ENCODE measurements at regions of chr7 and their contacts with region 1.

Region 1: DNA sequence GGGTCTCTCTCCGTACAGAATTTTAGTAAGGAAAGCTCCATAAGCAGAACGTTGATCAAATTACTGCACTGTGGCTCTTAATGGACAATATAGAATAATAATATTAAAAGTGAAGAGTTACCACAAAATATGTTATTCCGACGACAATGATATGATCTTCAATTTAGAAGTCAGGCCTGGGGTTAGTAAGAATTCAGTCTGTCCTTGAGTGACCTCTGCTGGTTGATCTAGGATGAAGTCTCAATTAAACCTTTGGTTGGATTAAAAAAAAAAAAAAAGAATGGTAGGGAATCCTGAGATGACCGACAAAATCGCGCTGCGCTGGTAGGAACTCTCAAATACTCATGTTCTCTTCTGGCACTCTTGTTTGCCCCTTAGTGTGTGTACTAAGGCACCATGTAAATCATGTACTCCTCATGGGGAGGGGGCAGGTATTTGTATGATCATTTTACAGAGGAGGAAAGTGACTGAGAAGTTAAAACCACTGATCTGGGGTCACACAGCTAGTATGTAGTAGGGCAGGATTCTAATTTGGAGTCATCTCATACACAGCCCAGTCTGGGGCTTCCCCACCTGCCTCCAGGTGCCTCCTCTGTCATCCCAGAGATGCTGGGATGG is 161.3 kb upstream of the NPVF start:
- DNase-seq: no peak
- H3K4me3 Mint-ChIP-seq: no peak overlapping the region
- H3K27ac Mint-ChIP-seq: no peak overlapping the region
- H3K4me1 Mint-ChIP-seq: no peaks in the 10 kb centered on the region
- H3K27me3 Mint-ChIP-seq: peaks cover 22% of the 10 kb centered on the region

Region 2: DNA sequence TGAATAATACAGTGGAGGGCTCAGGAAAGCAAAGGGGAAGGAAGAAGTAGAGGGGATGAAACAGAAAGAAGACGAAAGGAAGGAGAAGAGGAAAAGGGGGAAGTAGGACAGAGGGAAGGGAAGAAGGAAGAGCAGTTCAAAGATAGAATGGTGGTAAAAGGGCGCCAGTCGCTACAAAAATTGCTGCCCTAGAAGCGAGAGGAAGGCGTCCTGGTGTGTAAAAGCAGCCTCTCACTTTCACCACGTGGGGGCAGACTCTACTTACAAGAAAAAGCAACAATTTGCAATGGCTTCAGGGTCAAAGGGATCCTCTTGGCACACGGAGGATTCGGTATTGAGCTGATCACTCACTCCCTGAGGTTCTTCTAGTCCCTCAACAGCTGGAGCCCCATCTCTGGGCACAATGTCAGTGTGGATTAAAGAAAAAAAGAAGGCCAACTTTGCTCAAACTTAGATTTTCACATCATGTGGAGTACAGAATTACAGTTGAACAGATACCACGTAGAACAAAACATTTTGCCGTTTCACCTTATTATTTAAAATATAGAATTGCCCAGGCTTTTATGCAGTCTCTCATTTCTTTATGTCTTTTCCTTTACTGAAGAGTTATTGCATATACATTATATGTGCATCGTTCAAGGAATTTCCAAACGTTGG is 129.9 kb before region 1 on chr7:
- CTCF ChIA-PET with region 1: interaction called, 17 read pairs
- POLR2A ChIA-PET with region 1: interaction called, 3 read pairs
- DNase-seq: peak; percentile 72
- H3K4me3 Mint-ChIP-seq: no peak overlapping the region
- H3K27ac Mint-ChIP-seq: no peak overlapping the region
- H3K4me1 Mint-ChIP-seq: peaks cover 23% of the 10 kb centered on the region
- H3K27me3 Mint-ChIP-seq: peaks cover 9% of the 10 kb centered on the region

Region 3: DNA sequence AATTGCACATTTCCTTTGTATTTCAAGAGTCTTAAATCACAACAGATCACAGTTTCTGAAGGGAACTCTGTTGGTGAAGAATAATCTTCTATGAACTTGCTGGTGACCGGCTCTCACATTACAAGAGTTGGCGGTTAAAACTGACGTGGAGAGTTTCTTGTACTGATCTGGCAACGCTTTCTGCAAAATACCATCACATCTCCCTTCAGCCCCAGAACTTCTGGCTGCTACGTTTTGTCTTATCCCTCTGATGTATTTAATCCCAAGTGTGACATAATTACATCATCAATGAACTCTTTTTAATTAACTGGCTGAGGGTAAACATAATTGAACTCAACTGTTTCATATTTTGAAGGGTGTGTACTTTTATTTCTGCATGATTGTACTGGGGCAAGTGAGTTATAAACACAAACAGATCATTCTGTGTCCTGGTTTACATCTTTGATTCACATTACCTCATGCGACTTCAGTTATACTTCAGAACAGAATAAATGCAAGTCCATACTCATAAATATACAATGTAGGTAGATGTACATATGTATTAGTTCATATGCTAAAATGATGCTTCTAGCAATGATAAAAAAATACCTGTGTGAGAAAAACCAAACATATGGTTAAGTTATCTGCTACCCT is 56.2 kb before region 1 on chr7:
- CTCF ChIA-PET with region 1: no interaction called
- POLR2A ChIA-PET with region 1: no interaction called
- DNase-seq: no peak
- H3K4me3 Mint-ChIP-seq: no peak overlapping the region
- H3K27ac Mint-ChIP-seq: no peak overlapping the region
- H3K4me1 Mint-ChIP-seq: no peaks in the 10 kb centered on the region
- H3K27me3 Mint-ChIP-seq: peaks cover 9% of the 10 kb centered on the region

Region 4: DNA sequence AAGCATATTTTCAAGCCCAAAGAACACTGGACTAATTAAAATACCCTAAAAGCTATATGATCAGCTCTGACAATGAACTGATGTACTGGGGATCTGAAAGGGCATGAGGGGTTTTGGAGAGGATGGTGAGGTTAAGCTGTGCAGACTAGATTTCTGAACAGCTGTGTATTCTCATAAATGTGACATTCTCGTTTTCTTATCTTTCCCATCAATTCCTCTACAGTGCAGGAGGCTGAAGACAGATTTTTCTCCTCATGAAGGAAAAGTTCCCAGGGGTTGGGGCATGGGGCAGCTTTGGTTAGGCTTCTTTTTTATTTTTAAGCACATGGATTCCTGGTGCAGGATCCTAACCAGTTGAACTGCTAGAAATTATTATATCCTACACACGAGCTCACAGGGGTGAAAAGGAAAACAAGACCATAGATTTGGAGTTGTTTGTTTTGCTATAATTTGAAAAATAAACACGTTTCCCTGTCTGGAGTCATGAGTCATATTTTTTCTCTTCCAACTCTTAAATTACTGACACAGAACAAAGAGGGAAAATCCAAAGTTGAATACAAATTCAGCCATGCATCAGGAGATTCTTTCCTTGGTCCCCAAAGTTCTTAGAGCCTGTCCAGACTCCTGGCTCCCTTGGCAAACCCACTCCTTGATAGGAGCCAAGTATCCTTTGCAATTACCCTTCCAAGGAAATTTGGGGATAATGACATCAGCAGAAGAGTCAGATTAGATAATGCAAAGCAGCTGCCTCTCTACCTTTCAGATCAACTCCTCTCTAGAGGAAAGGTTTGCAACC is 13.6 kb before region 1 on chr7:
- CTCF ChIA-PET with region 1: no interaction called
- POLR2A ChIA-PET with region 1: no interaction called
- DNase-seq: no peak
- H3K4me3 Mint-ChIP-seq: no peak overlapping the region
- H3K27ac Mint-ChIP-seq: no peak overlapping the region
- H3K4me1 Mint-ChIP-seq: no peaks in the 10 kb centered on the region
- H3K27me3 Mint-ChIP-seq: peaks cover 9% of the 10 kb centered on the region

Region 5: GRCh38 chr7:25460433-25460832 is 70.8 kb after region 1 on chr7:
- CTCF ChIA-PET with region 1: no interaction called
- POLR2A ChIA-PET with region 1: no interaction called
- DNase-seq: no peak
- H3K4me3 Mint-ChIP-seq: no peak overlapping the region
- H3K27ac Mint-ChIP-seq: no peak overlapping the region
- H3K4me1 Mint-ChIP-seq: no peaks in the 10 kb centered on the region
- H3K27me3 Mint-ChIP-seq: peaks cover 35% of the 10 kb centered on the region

Measured in activated CD4-positive, alpha-beta memory T cell treated with anti-CD3 and anti-CD28 coated beads, Interleukin-2, amount 10 ng/mL, durations not matched to agents 7 days and 5 days (primary cell).